CD14-positive monocyte (primary cell): ENCODE measurements at regions of chr3 and their contacts with region 1.

Region 1: DNA sequence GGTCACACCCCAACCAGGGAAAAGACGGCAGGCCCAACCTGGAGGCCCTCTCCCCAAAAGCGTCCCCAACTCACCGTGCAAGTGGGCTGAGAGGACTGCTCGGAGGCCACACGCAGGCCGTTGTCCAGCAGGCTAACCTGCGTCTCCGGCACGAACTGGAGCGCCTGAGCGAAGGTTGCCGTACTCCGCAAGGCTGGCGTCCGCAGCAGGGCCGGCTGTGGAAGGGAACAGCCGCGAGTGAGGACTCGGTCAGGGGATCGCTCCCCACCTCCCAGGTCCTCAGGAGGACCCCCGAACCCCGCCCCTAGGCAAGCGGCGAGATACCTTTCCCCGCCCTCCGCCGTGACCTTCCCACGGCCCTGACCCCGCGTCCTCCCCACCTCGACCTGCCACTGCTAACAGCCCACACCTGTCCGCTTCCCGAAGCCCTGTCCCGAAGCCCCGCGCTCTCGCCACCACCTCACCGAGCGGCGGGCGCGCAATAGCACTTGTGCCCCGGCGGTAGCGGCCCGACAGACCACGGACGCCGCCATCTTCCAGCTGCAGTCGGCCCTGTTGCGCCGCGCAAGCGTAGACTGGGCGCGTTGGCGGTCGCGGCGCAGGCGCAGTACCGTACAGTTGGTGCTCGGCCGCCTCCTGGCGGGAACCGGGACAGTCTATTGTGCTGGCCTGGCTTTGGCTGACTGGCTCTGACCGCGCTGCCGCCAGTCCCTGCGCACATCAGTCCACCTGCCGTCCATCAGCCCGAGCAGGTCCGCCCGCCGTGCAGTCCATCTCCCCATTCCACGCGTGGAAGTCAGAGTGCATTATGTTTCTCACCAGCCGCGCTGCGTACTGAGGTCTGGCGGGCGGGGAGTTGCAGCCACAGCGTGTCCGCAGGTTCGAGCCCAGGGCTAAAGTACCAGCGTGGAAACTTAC is at the start of gene UQCRC1:
- DNase-seq: peak; percentile 93 to 94 (median 94)
- H3K4me3 ChIP-seq: peak within 1 kb of the TSS; percentile 70 to 96 (median 93)
- H3K4me3 Mint-ChIP-seq: peak within 1 kb of the TSS; percentile 94 to 97
- H3K27ac ChIP-seq: peak within 1 kb of the TSS; percentile 66 to 93
- H3K27ac Mint-ChIP-seq: peak within 1 kb of the TSS; percentile 87 to 99 (median 96)
- H3K4me1 ChIP-seq: peaks cover 25 to 27% of the 10 kb centered on the region in 2 donors
- H3K4me1 Mint-ChIP-seq: peaks cover 29% of the 10 kb centered on the region
- H3K27me3 ChIP-seq: no peaks in the 10 kb centered on the region
- H3K27me3 Mint-ChIP-seq: peaks cover 0 to 4% (median 3%) of the 10 kb centered on the region in 3 donors
- CTCF ChIP-seq: peak; percentile 85
- polyA plus RNA-seq, gene UQCRC1: 326 to 409 (median 350) TPM

Region 2: GRCh38 chr3:48465531-48466378 is 143.6 kb before region 1 on chr3:
- intact Hi-C with region 1: loop called in 1 of 2 experiments (anchors 1 kb)
- DNase-seq: peak; percentile 100
- H3K4me3 ChIP-seq: peak overlapping the region; percentile 55 to 91 (median 74)
- H3K4me3 Mint-ChIP-seq: peak overlapping the region; percentile 86 to 94
- H3K27ac ChIP-seq: peak overlapping the region; percentile 97 to 100
- H3K27ac Mint-ChIP-seq: peak overlapping the region; percentile 100
- H3K4me1 ChIP-seq: peaks cover 51% of the 10 kb centered on the region in 2 donors
- H3K4me1 Mint-ChIP-seq: peaks cover 47% of the 10 kb centered on the region
- H3K27me3 ChIP-seq: no peaks in the 10 kb centered on the region
- H3K27me3 Mint-ChIP-seq: peaks cover 0 to 2% (median 0%) of the 10 kb centered on the region in 3 donors
- CTCF ChIP-seq: no peak

Region 3: GRCh38 chr3:48564017-48564416 is 45.3 kb before region 1 on chr3:
- intact Hi-C with region 1: loop called in 1 of 2 experiments (anchors 2 kb)
- DNase-seq: peak; percentile 96 to 99 (median 98)
- H3K4me3 ChIP-seq: peak overlapping the region in 1 of 3 experiments; percentile 24
- H3K4me3 Mint-ChIP-seq: peak overlapping the region; percentile 17 to 78
- H3K27ac ChIP-seq: peak overlapping the region; percentile 47 to 78
- H3K27ac Mint-ChIP-seq: peak overlapping the region; percentile 83 to 98 (median 96)
- H3K4me1 ChIP-seq: peaks cover 75 to 78% of the 10 kb centered on the region in 2 donors
- H3K4me1 Mint-ChIP-seq: peaks cover 74% of the 10 kb centered on the region
- H3K27me3 ChIP-seq: no peaks in the 10 kb centered on the region
- H3K27me3 Mint-ChIP-seq: peaks cover 1 to 12% (median 2%) of the 10 kb centered on the region in 3 donors
- CTCF ChIP-seq: no peak

Region 4: DNA sequence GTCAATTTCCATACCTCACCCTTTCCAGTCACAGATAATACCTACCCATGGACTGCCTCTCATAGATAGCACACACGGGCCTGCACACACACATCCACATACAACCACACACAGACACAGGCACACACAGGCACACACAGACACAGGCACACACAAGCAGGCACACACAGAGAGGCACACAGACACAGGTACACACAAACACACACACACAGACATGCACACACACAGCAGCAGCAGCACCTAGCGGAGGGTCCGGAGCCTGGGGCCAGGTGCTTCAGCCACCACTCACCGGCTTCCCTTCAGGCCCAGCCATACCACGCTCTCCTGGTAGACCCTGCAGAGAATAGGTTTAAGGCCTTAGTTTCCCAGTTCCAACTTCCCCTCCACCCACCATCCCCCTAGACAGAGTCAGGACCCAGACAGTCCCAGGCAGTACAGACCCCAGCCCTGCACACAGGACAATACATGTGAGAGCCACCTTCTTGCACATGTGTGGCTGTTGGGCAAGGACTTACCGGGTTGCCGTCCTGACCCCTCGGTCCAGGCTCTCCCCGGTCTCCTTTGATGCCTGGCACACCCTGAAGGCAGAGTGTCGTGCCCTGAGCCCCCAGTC is 35.3 kb before region 1 on chr3:
- intact Hi-C with region 1: loop called in 1 of 2 experiments (anchors 5 kb)
- DNase-seq: no peak
- H3K4me3 ChIP-seq: no peak overlapping the region
- H3K4me3 Mint-ChIP-seq: no peak overlapping the region
- H3K27ac ChIP-seq: no peak overlapping the region
- H3K27ac Mint-ChIP-seq: no peak overlapping the region
- H3K4me1 ChIP-seq: no peaks in the 10 kb centered on the region
- H3K4me1 Mint-ChIP-seq: no peaks in the 10 kb centered on the region
- H3K27me3 ChIP-seq: no peaks in the 10 kb centered on the region
- H3K27me3 Mint-ChIP-seq: peaks cover 4 to 9% (median 5%) of the 10 kb centered on the region in 3 donors
- CTCF ChIP-seq: no peak

Region 5: GRCh38 chr3:48863122-48863521 is 253.8 kb after region 1 on chr3:
- intact Hi-C with region 1: no loop called
- DNase-seq: no peak
- H3K4me3 ChIP-seq: no peak overlapping the region
- H3K4me3 Mint-ChIP-seq: no peak overlapping the region
- H3K27ac ChIP-seq: no peak overlapping the region
- H3K27ac Mint-ChIP-seq: peak overlapping the region in 1 of 7 donors; percentile 10
- H3K4me1 ChIP-seq: peaks cover 6 to 7% of the 10 kb centered on the region in 2 donors
- H3K4me1 Mint-ChIP-seq: peaks cover 9% of the 10 kb centered on the region
- H3K27me3 ChIP-seq: no peaks in the 10 kb centered on the region
- H3K27me3 Mint-ChIP-seq: no peaks in the 10 kb centered on the region
- CTCF ChIP-seq: no peak